ENCODE measurements at regions of chr9 and their contacts with region 1.

Region 1: DNA sequence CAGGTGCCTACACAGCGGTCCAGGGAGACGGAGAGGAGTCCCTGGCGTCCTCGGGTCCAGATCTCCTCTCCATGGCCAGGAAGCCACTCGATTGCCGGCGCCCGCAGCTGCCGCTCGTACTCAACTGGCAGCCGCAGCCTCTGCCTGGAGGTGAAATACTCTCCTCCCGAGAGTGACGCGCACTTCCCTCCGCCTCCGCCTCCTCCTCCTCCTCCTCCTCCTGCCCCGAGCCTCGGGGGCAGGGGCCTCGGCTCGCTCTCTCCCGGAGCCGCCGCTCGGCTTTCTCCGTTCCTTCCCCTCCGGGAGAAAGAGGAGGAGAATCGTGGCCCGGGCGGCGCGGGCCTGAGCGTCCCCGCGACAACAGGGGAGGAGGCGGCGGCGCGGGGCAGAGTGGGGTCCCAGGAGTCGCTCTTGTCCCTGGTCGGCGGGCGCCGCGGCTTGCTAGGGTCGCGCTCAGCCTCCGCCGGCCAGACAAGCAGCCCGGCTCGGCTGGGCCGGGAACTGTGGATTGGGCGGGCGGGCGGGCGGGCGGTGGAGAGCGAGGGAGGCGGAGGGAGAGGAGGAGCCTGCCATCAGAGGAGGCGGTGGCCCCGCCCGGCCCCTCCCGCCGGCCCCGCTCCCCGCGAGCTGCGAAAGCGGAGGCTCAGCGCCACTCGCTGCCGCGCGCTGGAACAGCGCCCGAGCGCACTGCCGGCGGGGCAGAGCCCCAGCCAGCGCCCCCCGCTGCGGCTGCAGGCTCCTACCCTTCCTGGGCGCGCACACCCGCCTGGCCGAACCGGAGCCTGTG is at the start of gene CEMIP2:
- DNase-seq: peak; percentile 92 to 95 (median 94)
- ATAC-seq: peak; percentile 85
- H3K4me3 ChIP-seq: peak within 1 kb of the TSS; percentile 69
- H3K4me1 ChIP-seq: peaks cover 30% of the 10 kb centered on the region
- CTCF ChIP-seq: peak; percentile 5
- total RNA-seq, gene CEMIP2: 63.6 to 124 (median 99.3) TPM

Region 2: DNA sequence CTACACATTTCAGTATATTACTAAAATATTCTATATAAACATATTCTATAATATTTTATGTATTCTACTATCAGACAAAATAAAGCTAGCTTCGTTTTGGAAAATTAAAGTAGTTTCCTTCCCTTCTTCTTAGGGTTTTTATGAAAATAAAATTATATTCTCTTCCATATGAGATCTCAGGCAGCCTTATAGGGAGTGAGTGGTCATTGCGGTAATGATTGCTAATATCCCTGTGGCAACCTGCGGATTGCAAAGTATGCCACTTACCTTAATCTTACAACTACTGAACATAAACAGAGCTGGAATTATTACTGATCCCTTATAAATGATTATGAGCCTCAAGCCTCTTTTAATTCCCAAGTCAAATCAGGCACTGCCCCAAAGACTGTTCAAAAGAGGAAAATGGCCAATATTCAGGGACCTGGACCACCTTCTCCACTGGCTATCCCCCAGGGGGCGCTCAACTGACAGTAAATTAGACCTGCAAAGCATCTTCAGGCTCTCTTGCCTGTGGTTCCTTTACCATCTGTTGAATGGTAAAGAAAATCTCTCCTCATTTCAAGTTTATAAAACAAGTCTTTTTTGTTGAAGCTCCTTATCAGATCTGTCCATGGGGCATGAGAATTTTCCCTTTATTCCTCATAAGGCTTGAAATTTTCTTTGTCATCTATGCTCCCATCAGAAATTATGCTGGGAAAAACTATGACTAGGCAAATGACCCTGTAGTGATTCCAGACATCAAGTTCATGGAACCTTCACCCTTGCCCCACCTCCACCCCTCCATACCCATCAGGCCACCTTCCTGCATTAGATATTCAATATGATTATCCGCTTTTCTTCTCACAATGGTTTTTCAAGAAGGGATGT is 164.2 kb before region 1 on chr9:
- intact Hi-C with region 1: loop called in 1 of 2 experiments (anchors 10 kb)
- DNase-seq: peak; percentile 46 to 92 (median 81)
- ATAC-seq: peak; percentile 90
- H3K4me3 ChIP-seq: no peak overlapping the region
- H3K4me1 ChIP-seq: no peaks in the 10 kb centered on the region
- CTCF ChIP-seq: peak; percentile 77

Region 3: DNA sequence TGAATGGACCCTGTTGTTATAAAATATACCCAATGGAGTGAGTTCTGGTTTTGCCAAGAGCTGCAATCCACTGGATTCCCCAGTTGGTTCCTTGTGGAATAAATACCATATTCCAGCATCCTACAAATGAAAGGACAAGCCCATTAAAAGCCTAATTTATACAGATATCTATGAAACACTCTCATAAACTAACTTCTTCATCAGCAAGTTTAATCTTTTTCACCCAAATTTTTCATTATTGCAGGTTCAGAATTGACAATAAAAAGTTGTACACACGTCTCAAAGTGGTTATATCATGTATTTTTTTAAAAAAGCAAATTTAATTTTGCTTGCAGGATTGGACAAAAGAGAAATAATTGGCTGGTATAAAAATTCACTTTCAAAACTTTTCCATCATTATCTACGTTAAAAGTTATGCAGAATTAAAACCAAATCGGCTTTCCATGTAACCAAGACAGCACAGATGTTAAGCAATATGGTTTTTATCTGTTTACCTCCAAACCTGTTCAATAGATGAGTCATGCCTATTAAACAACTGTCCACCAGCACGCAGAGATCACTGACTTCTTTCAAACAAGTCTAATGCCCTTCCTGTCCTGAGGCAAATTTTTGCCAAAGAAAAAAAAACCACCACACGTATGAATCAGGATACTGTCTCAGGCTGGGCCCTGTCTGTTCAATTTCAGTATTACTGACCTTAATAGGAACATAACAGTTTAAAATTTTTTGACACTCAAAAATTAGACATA is 42.8 kb before region 1 on chr9:
- intact Hi-C with region 1: loop called in 1 of 2 experiments (anchors 5 kb)
- DNase-seq: no peak
- ATAC-seq: peak; percentile 69
- H3K4me3 ChIP-seq: no peak overlapping the region
- H3K4me1 ChIP-seq: no peaks in the 10 kb centered on the region
- CTCF ChIP-seq: no peak